ENCODE measurements at regions of chr18 and their contacts with region 1.

Region 1: GRCh38 chr18:47215554-47216138 is 35.8 kb downstream of the SKOR2 start:
- DNase-seq: peak; percentile 29

Region 2: GRCh38 chr18:47748847-47749599 is 533.4 kb after region 1 on chr18:
- CTCF ChIA-PET with region 1: interaction called, 24 read pairs
- POLR2A ChIA-PET with region 1: no interaction called
- DNase-seq: peak; percentile 77

Region 3: DNA sequence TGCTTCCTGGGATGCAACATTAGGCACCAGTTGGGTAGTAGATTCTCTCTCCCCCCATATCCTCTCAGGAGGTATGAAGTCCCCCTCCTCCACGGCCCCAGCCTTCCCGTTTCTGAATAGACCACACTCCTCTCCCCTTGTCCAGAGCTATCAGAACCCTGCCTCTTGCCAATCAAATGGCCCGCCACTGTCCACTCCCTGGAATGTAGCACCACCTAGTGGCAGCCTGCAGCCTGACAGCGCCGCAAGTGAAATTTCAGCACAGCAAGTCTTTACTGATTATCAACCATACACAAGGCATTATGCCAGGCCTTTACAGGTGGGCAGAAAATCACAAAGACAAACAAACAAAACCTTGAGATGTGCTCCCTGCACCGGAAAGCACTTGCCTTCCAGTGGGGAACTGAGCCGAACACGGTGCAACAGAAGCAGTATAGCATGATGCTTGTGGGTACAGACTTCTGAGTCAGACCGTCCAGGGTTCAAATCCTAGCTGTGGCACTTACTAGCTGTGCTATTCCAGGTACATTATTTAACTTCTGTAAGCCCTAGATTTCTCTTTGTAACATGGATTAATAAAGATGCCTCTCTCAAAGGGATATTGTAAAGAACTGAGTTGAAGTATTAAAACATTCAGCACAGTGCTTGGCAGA is 540.8 kb after region 1 on chr18:
- CTCF ChIA-PET with region 1: interaction called, 10 read pairs
- POLR2A ChIA-PET with region 1: no interaction called
- DNase-seq: peak; percentile 50